ENCODE measurements at regions of chr11 and their contacts with region 1.

Region 1: GRCh38 chr11:73876424-73877300 is at the starts of genes COA4 and PAAF1:
- DNase-seq: peak; percentile 81 to 98 (median 92)
- ATAC-seq: peak; percentile 96
- H3K4me3 ChIP-seq: peak within 1 kb of the TSS; percentile 75 to 79
- H3K4me3 Mint-ChIP-seq: peak within 1 kb of the TSS; percentile 97
- H3K27ac ChIP-seq: peak within 1 kb of the TSS; percentile 79 to 81
- H3K27ac Mint-ChIP-seq: peak within 1 kb of the TSS; percentile 98
- H3K4me1 ChIP-seq: peaks cover 21% of the 10 kb centered on the region
- H3K4me1 Mint-ChIP-seq: peaks cover 42% of the 10 kb centered on the region
- H3K27me3 ChIP-seq: no peaks in the 10 kb centered on the region
- H3K27me3 Mint-ChIP-seq: no peaks in the 10 kb centered on the region
- CTCF ChIP-seq: no peak
- total RNA-seq, gene COA4: 22.0 to 25.1 TPM
- total RNA-seq, gene PAAF1: 6.2 to 6.4 TPM

Region 2: GRCh38 chr11:71928737-71929452 is 1947.8 kb before region 1 on chr11 and contains the start of gene RNF121:
- CTCF ChIA-PET with region 1: no interaction called
- POLR2A ChIA-PET with region 1: no interaction called
- intact Hi-C with region 1: loop called in 1 of 2 experiments (anchors 10 kb)
- DNase-seq: peak; percentile 94 to 99 (median 97)
- ATAC-seq: peak; percentile 86
- H3K4me3 ChIP-seq: peak within 1 kb of the TSS; percentile 67 to 98
- H3K4me3 Mint-ChIP-seq: peak within 1 kb of the TSS; percentile 100
- H3K27ac ChIP-seq: peak within 1 kb of the TSS; percentile 90 to 96
- H3K27ac Mint-ChIP-seq: peak within 1 kb of the TSS; percentile 99
- H3K4me1 ChIP-seq: peaks cover 22% of the 10 kb centered on the region
- H3K4me1 Mint-ChIP-seq: peaks cover 57% of the 10 kb centered on the region
- H3K27me3 ChIP-seq: no peaks in the 10 kb centered on the region
- H3K27me3 Mint-ChIP-seq: no peaks in the 10 kb centered on the region
- CTCF ChIP-seq: no peak
- total RNA-seq, gene RNF121: 8.5 to 9.0 TPM

Region 3: DNA sequence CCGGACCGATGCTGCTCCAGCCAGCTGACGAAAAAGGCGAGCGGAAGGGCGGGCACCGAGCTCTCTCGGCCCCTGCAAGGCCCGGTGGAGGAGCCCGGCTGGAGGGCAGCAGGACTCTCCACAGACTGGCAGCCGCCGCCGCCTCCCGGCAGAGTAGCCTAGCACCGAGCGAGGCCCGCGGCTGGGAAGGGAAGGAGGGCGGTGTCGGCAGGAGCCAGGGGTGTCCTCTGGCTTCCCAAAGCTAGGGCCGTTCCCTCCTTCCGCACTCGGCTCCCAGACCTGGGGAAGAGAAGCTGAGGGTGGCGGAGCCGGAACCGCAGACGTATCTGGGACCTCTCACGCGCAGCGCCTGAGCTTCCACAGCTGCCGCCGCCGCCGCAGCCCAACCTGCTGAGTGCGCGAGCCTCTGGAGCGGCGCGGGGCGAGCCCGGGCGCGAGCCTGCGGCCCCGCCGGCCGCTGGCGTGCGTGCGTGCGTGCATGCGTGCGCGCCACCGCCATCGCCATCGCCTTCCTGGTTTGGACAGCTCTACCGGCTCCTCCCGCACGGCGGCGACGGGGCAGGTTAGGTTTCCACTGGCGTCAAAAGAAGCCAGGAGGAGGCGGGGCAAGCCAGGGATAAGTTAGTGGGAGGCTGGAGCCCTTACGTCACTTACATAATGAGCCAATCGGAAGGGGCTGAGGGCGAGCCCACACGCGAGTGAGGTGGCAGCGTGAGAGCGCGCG is 115.8 kb before region 1 on chr11 and contains the start of gene RAB6A:
- CTCF ChIA-PET with region 1: no interaction called
- POLR2A ChIA-PET with region 1: interaction called, 3 read pairs
- intact Hi-C with region 1: loop called (anchors 1 kb)
- DNase-seq: peak; percentile 99 to 100 (median 99)
- ATAC-seq: peak; percentile 93
- H3K4me3 ChIP-seq: peak within 1 kb of the TSS; percentile 69 to 93
- H3K4me3 Mint-ChIP-seq: peak within 1 kb of the TSS; percentile 85
- H3K27ac ChIP-seq: peak within 1 kb of the TSS; percentile 71 to 90
- H3K27ac Mint-ChIP-seq: peak within 1 kb of the TSS; percentile 95
- H3K4me1 ChIP-seq: peaks cover 17% of the 10 kb centered on the region
- H3K4me1 Mint-ChIP-seq: peaks cover 29% of the 10 kb centered on the region
- H3K27me3 ChIP-seq: no peaks in the 10 kb centered on the region
- H3K27me3 Mint-ChIP-seq: no peaks in the 10 kb centered on the region
- CTCF ChIP-seq: peak; percentile 24
- total RNA-seq, gene RAB6A: 43.7 to 53.3 TPM

Region 4: GRCh38 chr11:73787643-73788537 is 88.8 kb before region 1 on chr11 and contains the start of gene MRPL48:
- CTCF ChIA-PET with region 1: no interaction called
- POLR2A ChIA-PET with region 1: no interaction called
- intact Hi-C with region 1: loop called (anchors 1 to 2 kb)
- DNase-seq: peak; percentile 75 to 93 (median 88)
- ATAC-seq: peak; percentile 100
- H3K4me3 ChIP-seq: peak within 1 kb of the TSS; percentile 87 to 89
- H3K4me3 Mint-ChIP-seq: peak within 1 kb of the TSS; percentile 100
- H3K27ac ChIP-seq: peak within 1 kb of the TSS; percentile 77 to 82
- H3K27ac Mint-ChIP-seq: peak within 1 kb of the TSS; percentile 99
- H3K4me1 ChIP-seq: peaks cover 4% of the 10 kb centered on the region
- H3K4me1 Mint-ChIP-seq: peaks cover 33% of the 10 kb centered on the region
- H3K27me3 ChIP-seq: no peaks in the 10 kb centered on the region
- H3K27me3 Mint-ChIP-seq: no peaks in the 10 kb centered on the region
- CTCF ChIP-seq: no peak
- total RNA-seq, gene MRPL48: 10.2 to 13.7 TPM

Region 5: GRCh38 chr11:73851046-73851764 is 25.5 kb before region 1 on chr11:
- CTCF ChIA-PET with region 1: no interaction called
- POLR2A ChIA-PET with region 1: no interaction called
- intact Hi-C with region 1: no loop called
- DNase-seq: no peak
- ATAC-seq: no peak
- H3K4me3 ChIP-seq: no peak overlapping the region
- H3K4me3 Mint-ChIP-seq: no peak overlapping the region
- H3K27ac ChIP-seq: no peak overlapping the region
- H3K27ac Mint-ChIP-seq: no peak overlapping the region
- H3K4me1 ChIP-seq: no peaks in the 10 kb centered on the region
- H3K4me1 Mint-ChIP-seq: no peaks in the 10 kb centered on the region
- H3K27me3 ChIP-seq: no peaks in the 10 kb centered on the region
- H3K27me3 Mint-ChIP-seq: no peaks in the 10 kb centered on the region
- CTCF ChIP-seq: no peak

Region 6: GRCh38 chr11:75399344-75400145 is 1522.9 kb after region 1 on chr11 and contains the start of gene RPS3:
- CTCF ChIA-PET with region 1: no interaction called
- POLR2A ChIA-PET with region 1: no interaction called
- intact Hi-C with region 1: loop called in 1 of 2 experiments (anchors 5 kb)
- DNase-seq: peak; percentile 72 to 93 (median 88)
- ATAC-seq: peak; percentile 88
- H3K4me3 ChIP-seq: peak within 1 kb of the TSS; percentile 69 to 76
- H3K4me3 Mint-ChIP-seq: peak within 1 kb of the TSS; percentile 95
- H3K27ac ChIP-seq: peak within 1 kb of the TSS; percentile 88 to 89
- H3K27ac Mint-ChIP-seq: peak within 1 kb of the TSS; percentile 95
- H3K4me1 ChIP-seq: peaks cover 28% of the 10 kb centered on the region
- H3K4me1 Mint-ChIP-seq: peaks cover 48% of the 10 kb centered on the region
- H3K27me3 ChIP-seq: no peaks in the 10 kb centered on the region
- H3K27me3 Mint-ChIP-seq: no peaks in the 10 kb centered on the region
- CTCF ChIP-seq: no peak
- total RNA-seq, gene RPS3: 4,683 to 5,039 TPM

Measured in CD8-positive, alpha-beta T cell (primary cell).